RWPE1 (cell line): ENCODE measurements at regions of chr1 and their contacts with region 1.

Region 1: GRCh38 chr1:203267347-203267846 is 37.9 kb upstream of the BTG2 start:
- DNase-seq: peak; percentile 74
- H3K27ac ChIP-seq: peak overlapping the region; percentile 63
- CTCF ChIP-seq: peak; percentile 94

Region 2: DNA sequence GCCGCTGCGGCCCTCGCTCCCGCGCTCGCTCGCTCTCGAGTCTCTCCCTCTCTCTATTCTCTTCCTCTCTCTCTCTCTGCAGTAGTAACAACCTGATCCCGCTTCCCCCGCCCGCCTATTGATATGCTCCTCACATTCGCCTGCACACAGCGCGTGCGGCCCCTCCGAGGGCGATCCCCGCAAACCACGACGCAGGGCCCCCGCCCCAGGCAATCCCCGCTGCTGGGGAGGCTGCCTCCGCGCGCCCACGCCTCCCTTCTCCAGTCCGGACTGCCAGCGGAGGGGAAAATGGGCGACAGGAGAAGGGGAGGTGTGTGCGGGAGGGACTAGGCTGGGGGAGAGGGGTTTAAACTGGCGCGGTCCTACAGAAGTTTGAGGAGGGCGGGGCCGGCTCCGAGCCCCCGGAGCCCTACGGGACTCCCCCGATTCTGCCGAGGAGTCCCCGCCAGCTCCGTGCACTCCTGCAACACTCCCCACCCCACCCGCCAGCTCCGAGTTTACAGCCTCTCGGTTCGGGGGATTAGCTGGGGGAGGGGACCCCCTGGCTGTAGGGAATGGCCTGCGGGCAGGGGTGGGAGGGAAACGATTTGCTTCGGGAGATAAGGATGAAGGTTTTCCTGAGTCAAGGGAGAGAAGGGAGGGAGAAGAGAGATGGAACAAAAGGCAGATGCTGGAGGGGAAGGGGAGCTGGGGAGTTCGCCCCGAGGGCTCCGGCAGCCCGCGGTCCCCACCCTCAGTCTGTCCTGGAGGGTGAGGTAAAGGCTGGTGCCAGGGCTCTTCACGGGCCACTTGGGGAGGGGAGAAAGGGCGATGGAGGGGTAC is 623.8 kb before region 1 on chr1:
- CTCF ChIA-PET with region 1: no interaction called
- POLR2A ChIA-PET with region 1: no interaction called
- DNase-seq: no peak
- H3K27ac ChIP-seq: no peak overlapping the region
- CTCF ChIP-seq: no peak

Region 3: GRCh38 chr1:203038891-203039608 is 228.3 kb before region 1 on chr1:
- CTCF ChIA-PET with region 1: interaction called, 98 read pairs
- POLR2A ChIA-PET with region 1: no interaction called
- DNase-seq: peak; percentile 89
- H3K27ac ChIP-seq: peak overlapping the region; percentile 69
- CTCF ChIP-seq: peak; percentile 91

Region 4: GRCh38 chr1:203172128-203173010 is 95.0 kb before region 1 on chr1:
- CTCF ChIA-PET with region 1: interaction called, 15 read pairs
- POLR2A ChIA-PET with region 1: no interaction called
- DNase-seq: peak; percentile 82
- H3K27ac ChIP-seq: no peak overlapping the region
- CTCF ChIP-seq: peak; percentile 67

Region 5: GRCh38 chr1:203239526-203240305 is 27.7 kb before region 1 on chr1:
- CTCF ChIA-PET with region 1: interaction called, 25 read pairs
- POLR2A ChIA-PET with region 1: no interaction called
- DNase-seq: no peak
- H3K27ac ChIP-seq: no peak overlapping the region
- CTCF ChIP-seq: no peak

Region 6: DNA sequence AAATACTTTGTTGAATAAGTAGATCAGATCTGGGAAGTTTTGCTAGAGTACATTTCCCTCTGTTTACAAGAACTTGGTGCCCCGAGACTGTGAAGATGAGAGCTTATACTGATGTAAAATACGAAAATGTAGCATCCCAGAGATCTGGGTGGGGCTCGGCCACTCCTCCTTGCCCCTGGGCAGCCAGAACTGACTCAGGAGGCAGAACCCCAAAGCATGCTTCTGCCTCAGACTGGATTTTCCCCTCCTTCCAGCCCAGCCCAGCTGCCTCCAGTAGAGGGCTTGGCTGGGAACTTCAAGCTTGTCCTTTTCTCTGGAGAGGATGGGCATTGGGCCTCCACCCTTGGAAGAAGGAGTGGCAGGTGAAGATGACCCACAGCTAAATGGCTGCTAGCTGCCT is 13.6 kb after region 1 on chr1:
- CTCF ChIA-PET with region 1: interaction called, 42 read pairs
- POLR2A ChIA-PET with region 1: no interaction called
- DNase-seq: peak; percentile 92
- H3K27ac ChIP-seq: peak overlapping the region; percentile 64
- CTCF ChIP-seq: no peak; the same call in 1 of the 2 replicates

Region 7: DNA sequence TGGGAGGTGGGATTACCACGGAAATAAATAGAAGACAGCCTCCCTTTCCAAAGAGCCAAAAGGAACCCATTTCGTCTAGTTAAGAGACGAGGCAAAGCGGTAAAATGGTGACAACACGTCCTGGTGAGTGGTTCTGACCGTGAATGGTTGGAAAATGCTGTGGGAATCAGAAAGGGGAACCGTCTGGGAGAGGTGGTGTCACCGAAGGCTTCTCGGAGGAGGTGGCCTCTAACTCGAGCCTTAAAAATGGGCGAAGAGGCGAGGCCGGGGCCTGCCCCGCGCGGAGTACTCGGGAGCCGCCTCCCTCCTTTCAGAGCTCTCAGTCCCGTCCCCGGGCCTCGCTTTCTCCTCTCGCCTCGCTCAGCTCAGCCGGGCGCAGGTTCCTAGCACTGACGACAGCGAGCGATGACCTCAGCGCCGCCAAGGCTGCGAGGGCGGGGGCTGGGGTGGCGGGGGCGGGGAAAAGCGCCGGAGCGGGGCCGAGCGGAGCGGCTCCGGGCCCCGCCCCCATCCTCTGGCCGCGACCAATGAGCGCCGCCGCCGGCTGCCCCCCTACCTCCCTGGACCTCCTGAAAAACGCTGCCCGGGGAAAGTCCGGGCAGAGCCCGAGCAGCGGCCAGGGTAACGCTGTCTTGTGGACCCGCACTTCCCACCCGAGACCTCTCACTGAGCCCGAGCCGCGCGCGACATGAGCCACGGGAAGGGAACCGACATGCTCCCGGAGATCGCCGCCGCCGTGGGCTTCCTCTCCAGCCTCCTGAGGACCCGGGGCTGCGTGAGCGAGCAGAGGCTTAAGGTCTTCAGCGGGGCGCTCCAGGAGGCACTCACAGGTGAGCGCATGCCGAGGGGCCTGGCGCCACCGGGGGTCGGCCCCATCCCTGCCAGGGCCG is 37.8 kb after region 1 on chr1 and contains the start of gene BTG2:
- CTCF ChIA-PET with region 1: interaction called, 44 read pairs
- POLR2A ChIA-PET with region 1: no interaction called
- DNase-seq: peak; percentile 99
- H3K27ac ChIP-seq: peak within 1 kb of the TSS; percentile 92
- CTCF ChIP-seq: no peak

Region 8: DNA sequence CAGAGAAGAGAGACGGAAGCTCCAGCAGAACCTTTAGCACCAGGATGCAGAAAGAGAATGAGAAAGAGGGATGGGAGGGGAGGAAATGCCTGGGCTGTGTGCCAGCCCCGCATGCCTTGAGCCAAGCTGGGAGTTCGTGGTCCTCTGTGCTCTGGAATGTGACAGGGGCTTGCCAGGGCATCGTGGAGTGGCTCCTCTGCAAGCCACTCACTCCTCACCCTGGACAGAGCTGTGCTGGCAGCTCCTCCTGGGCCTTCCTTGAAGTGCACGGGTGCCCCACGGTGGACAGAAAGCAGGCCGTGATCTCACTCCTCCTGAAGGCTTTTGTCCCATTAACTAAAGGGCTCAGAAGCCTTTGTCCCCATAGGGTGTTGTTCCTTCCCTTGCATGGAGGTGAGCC is 173.4 kb after region 1 on chr1:
- CTCF ChIA-PET with region 1: interaction called, 20 read pairs
- POLR2A ChIA-PET with region 1: no interaction called
- DNase-seq: peak; percentile 43
- H3K27ac ChIP-seq: no peak overlapping the region
- CTCF ChIP-seq: peak; percentile 28